Activated naive CD4-positive, alpha-beta T cell treated with anti-CD3 and anti-CD28 coated beads for 36 hours (primary cell): ENCODE measurements at regions of chr2 and their contacts with region 1.

Region 1: DNA sequence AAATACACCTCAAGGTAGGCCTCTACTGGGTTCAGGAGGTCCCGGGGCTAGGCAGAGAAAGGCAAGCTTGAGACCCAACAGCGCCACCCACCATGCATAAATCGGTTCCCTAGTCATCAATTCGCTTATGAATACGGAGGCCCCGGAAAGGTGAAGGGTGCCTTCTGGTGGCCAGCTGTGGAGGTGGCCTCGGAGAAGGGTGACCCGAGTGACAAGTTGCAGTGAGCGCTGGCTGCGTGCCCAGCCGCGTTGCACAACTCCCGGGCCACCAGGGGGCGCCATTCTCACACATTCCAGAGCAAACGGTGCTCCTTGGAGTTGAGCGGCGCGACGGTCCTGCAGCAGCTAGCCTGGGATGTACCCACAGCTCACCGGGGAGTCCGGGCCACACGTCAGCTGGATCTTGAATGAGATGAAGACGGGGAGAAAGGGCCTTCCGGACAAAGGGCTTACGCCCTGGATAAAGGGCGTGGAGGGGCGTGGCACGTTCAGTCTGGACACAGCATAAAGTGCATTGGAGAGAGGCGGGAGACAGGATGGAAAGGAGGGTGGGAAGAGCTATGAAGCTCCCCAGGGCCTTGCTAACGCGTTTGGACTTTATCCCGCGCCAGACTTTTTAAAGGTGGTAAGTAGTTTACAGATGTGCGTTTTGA is 20.4 kb downstream of the TMSB10 start:
- DNase-seq: peak; percentile 100
- H3K4me3 Mint-ChIP-seq: peak overlapping the region; percentile 87
- H3K27ac Mint-ChIP-seq: peak overlapping the region; percentile 97
- H3K4me1 Mint-ChIP-seq: peaks cover 49% of the 10 kb centered on the region
- H3K27me3 Mint-ChIP-seq: no peaks in the 10 kb centered on the region

Region 2: DNA sequence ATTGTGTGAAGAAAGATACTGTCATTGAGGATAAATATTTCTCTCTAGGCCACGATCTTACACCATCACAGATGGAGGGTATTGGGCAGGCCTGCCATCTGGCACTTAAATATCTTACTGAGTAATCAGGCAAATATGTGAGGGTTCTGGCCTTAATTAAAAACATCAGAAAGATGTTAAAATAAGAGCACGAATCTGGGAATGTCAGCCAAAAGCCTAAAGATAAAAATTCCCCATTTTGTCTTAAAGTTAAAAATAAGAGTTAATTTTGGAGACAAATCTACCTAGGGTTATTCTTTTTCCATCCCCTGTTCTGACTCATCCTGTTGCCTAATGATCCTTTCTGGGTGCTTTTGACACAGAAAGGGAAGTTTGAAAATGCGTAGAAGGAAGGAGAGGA is 587.8 kb before region 1 on chr2:
- CTCF ChIA-PET with region 1: no interaction called
- intact Hi-C with region 1: no loop called
- DNase-seq: no peak
- H3K4me3 Mint-ChIP-seq: no peak overlapping the region
- H3K27ac Mint-ChIP-seq: no peak overlapping the region
- H3K4me1 Mint-ChIP-seq: no peaks in the 10 kb centered on the region
- H3K27me3 Mint-ChIP-seq: peaks cover 9% of the 10 kb centered on the region

Region 3: DNA sequence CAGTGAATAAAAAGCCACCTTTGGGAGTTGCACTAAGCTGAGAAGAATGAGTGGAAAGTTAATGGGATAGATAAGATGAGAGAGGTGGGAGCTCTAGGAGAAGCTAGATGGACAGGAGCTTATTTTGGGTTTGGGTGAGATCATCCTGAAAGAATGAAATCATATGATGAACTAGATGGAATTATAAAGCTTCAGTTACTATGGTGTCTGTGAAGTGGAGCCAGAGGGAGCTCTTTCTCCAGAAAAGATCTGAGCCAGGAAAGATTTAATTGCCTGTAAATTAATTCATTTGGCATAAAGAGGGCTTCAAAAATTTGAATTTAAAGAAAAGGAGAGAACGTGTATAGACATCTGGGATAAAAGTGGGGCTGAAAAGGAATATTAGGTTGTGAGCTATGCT is 399.3 kb before region 1 on chr2:
- CTCF ChIA-PET with region 1: interaction called, 9 read pairs
- intact Hi-C with region 1: loop called (anchors 1 kb)
- DNase-seq: no peak
- H3K4me3 Mint-ChIP-seq: no peak overlapping the region
- H3K27ac Mint-ChIP-seq: peak overlapping the region; percentile 50
- H3K4me1 Mint-ChIP-seq: peaks cover 17% of the 10 kb centered on the region
- H3K27me3 Mint-ChIP-seq: no peaks in the 10 kb centered on the region

Region 4: GRCh38 chr2:84846041-84846663 is 79.7 kb before region 1 on chr2:
- CTCF ChIA-PET with region 1: interaction called, 9 read pairs
- intact Hi-C with region 1: loop called (anchors 2 kb)
- DNase-seq: peak; percentile 66
- H3K4me3 Mint-ChIP-seq: peak overlapping the region; percentile 78
- H3K27ac Mint-ChIP-seq: peak overlapping the region; percentile 99
- H3K4me1 Mint-ChIP-seq: peaks cover 95% of the 10 kb centered on the region
- H3K27me3 Mint-ChIP-seq: no peaks in the 10 kb centered on the region

Region 5: GRCh38 chr2:84888401-84889276 is 37.2 kb before region 1 on chr2:
- CTCF ChIA-PET with region 1: interaction called, 61 read pairs
- intact Hi-C with region 1: no loop called
- DNase-seq: peak; percentile 73
- H3K4me3 Mint-ChIP-seq: peak overlapping the region; percentile 74
- H3K27ac Mint-ChIP-seq: peak overlapping the region; percentile 95
- H3K4me1 Mint-ChIP-seq: peaks cover 53% of the 10 kb centered on the region
- H3K27me3 Mint-ChIP-seq: no peaks in the 10 kb centered on the region

Region 6: DNA sequence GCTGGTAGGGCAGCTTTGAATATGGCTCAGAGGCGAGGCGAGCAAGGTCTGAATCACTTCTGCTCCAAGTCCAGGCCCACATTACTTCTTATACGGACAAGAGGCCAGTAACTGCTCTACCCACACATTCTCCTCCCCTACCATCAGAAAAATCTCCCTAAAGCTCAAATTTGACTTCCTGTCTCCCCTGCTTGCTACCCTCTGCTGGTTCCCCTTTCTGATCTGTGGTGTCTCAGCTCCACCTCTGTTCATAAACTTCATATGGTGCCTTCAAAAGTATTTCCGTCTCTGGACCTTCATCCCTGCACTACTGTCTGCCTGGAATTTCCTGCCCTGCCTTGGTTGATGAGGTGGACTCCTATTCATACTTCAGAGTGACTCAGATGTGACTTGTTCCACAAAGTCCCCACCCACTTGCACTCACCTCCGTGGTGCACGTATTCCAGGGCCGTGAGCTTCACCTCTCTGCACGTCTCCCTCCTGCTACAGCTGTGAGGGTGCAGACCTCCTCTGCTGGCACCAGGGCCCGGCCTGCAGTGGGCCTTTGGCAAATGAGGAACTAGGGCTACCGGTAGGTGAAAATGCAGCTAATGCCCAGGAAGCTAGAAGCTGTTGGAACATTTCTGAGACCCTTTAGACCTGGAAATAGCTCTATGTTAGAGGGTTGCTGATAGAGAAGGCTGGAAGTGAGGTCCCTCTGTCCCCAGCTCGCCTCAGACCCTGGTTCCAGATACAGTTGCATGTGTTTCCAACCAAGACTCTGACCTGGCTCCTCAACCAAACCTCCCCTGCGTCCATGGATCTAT is 20.6 kb after region 1 on chr2:
- CTCF ChIA-PET with region 1: interaction called, 81 read pairs
- intact Hi-C with region 1: loop called (anchors 1 kb)
- DNase-seq: peak; percentile 86
- H3K4me3 Mint-ChIP-seq: peak overlapping the region; percentile 62
- H3K27ac Mint-ChIP-seq: peak overlapping the region; percentile 92
- H3K4me1 Mint-ChIP-seq: peaks cover 49% of the 10 kb centered on the region
- H3K27me3 Mint-ChIP-seq: no peaks in the 10 kb centered on the region

Region 7: GRCh38 chr2:85066874-85067351 is 141.1 kb after region 1 on chr2:
- CTCF ChIA-PET with region 1: interaction called, 9 read pairs
- intact Hi-C with region 1: loop called (anchors 2 kb)
- DNase-seq: peak; percentile 65
- H3K4me3 Mint-ChIP-seq: peak overlapping the region; percentile 24
- H3K27ac Mint-ChIP-seq: no peak overlapping the region
- H3K4me1 Mint-ChIP-seq: peaks cover 4% of the 10 kb centered on the region
- H3K27me3 Mint-ChIP-seq: peaks cover 14% of the 10 kb centered on the region